ENCODE measurements at regions of chr18 and their contacts with region 1.

Region 1: DNA sequence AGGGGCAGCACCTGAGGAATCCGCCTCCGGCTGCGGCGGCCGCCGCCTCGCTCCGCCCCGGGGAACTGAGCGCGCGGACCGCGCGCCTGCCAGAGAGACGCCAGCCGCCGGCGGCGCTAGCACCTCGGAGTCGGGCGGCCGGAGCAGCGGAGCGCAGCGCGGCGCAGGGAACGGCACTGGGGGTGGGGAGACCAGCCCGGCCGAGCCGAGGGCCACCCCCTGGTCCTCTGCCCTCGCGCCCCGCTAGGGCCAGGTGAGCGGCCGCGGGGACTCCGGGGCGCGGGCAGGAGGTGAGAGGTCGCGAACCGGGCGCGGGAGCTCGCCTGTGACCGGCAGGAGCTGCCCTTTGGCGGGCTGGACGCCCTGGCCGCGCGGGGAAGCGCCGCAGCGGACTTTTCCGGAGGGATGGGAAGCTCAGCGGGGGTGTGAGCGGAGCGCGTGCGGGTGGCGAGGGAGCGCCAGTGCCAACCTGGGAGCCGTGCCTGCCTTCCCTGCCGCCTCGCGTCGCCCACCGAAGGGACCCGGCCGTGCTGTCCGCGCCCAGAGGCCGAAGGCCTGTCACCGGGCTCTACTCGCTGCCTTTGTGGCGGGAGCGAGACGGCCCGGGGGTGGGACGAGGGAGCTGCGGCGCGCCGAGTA is at the start of gene GREB1L:
- DNase-seq: peak; percentile 68 to 89
- ATAC-seq: peak; percentile 91
- H3K4me3 ChIP-seq: peak within 1 kb of the TSS; percentile 80 to 82
- H3K27ac ChIP-seq: peak within 1 kb of the TSS in 1 of 2 donors; percentile 13
- H3K4me1 ChIP-seq: no peaks in the 10 kb centered on the region
- H3K27me3 ChIP-seq: no peaks in the 10 kb centered on the region
- total RNA-seq, gene GREB1L: 5.1 to 6.0 TPM

Region 2: DNA sequence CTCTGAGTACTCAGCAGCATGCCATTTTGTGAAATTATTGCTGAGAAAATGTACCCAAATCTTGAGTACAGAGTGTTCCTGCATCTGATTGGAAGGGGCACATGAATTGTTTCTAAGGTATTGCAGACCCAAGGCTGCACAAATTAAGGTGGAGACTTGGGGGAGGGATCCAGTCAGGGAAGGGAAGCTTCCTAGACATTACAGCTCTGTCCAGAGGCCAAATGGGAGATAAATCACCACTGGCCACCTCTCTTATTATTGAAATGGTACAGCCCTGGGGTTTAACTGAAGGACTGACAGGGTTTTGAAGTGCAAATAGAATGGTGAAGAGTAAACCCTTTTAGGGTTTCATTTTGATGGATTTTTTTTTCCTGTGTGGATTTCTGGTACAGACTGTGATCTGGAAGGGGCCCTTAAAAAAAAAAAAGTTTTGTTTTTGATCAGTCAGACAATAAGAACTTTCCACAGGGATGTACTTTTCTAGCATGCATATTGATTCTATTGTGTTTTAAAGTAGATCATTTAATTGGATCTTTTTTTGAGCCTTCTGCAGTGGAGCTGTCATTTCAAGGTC is 119.1 kb after region 1 on chr18:
- intact Hi-C with region 1: loop called in 1 of 2 experiments (anchors 10 kb)
- DNase-seq: no peak
- ATAC-seq: no peak
- H3K4me3 ChIP-seq: no peak overlapping the region
- H3K27ac ChIP-seq: peak overlapping the region in 1 of 2 donors; percentile 12
- H3K4me1 ChIP-seq: peaks cover 0 to 3% of the 10 kb centered on the region in 2 donors
- H3K27me3 ChIP-seq: no peaks in the 10 kb centered on the region

Region 3: DNA sequence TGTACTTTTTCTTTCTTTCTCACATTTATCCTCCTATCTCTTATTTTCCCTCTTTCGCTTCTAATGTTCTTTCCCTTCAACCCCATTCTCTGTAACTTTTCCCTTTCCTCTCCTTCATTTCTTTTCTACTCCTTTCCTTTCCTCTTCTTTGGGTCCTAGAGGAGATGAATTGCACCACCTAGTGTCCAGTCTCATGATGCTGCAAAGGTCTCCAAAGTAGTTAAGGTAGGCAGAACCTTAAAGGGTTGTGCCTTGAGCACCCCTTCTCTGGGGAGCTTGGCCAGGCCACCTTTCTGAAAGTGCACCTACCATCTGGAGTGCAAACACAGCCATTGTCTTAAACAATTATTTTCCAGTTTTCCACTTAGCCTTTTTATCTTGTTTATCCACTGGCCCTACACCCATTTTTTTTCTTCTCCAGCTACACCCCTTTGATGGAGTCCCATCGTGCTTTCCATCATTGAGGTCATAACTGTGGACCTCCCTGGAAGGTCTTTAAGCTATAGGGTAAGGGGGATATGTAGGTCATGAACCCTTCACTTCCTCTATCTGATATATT is 202.3 kb after region 1 on chr18:
- intact Hi-C with region 1: loop called in 1 of 2 experiments (anchors 5 kb)
- DNase-seq: no peak
- ATAC-seq: peak; percentile 71
- H3K4me3 ChIP-seq: no peak overlapping the region
- H3K27ac ChIP-seq: no peak overlapping the region
- H3K4me1 ChIP-seq: no peaks in the 10 kb centered on the region
- H3K27me3 ChIP-seq: no peaks in the 10 kb centered on the region

Region 4: DNA sequence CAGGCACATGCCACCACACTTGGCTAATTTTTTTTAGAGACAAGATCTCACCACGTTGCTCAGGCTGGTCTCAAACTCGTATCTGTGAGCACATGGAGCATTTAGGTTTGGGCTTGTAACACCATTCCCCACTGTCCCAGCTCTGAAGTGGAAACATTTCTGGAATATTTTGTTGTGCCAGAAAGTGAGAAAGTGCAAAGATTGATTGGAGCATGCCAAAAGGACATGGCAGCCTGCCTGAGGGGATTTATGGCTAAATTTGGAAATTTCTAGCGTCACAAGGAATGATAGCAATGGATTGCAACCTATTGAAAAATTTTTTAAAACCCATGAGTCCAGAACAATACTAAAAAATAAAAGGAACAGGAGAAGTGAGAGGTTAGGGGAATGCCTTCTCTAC is 221.5 kb after region 1 on chr18:
- intact Hi-C with region 1: loop called in 1 of 2 experiments (anchors 5 kb)
- DNase-seq: peak in 1 of 2 donors; percentile 66
- ATAC-seq: peak; percentile 70
- H3K4me3 ChIP-seq: no peak overlapping the region
- H3K27ac ChIP-seq: peak overlapping the region; percentile 15 to 91
- H3K4me1 ChIP-seq: peaks cover 2 to 3% of the 10 kb centered on the region in 2 donors
- H3K27me3 ChIP-seq: no peaks in the 10 kb centered on the region

Region 5: GRCh38 chr18:21593540-21594257 is 351.4 kb after region 1 on chr18:
- intact Hi-C with region 1: no loop called
- DNase-seq: no peak
- ATAC-seq: no peak
- H3K4me3 ChIP-seq: no peak overlapping the region
- H3K27ac ChIP-seq: no peak overlapping the region
- H3K4me1 ChIP-seq: no peaks in the 10 kb centered on the region
- H3K27me3 ChIP-seq: no peaks in the 10 kb centered on the region

Measured in aorta (tissue), 5 donors.